Colonic mucosa (tissue), 4 donors: ENCODE measurements at regions of chr11 and their contacts with region 1.

Region 1: DNA sequence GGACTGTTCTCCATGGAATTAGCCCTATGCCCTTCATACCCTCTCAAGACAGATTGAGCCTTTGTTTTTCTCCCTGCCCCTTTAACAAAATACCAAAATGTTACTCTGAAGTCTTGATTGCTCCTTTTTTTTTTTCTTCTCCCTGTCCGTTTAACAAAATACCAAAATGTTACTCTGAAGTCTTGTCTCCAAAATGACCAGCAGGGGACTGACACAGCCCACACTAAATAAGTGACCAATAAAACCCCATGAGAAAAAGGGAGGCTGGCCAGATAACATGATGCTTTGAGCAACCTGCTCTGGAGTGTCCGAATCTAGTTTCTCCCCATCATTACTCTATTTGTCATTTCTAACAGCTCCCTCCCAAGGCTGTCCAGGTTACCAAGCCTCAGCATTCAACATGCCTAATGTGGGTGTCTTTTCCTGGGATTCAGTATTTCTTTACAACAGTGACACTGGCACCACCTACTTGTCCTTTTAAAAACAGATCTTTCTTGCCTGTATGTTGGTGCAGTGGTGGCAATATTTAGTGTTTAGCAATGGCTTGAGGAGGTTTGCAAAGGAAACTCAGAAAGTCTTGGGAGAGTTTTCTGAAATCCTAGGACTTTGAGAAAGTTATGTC is 42.7 kb upstream of the SLC1A2 start:
- DNase-seq: no peak
- H3K4me3 ChIP-seq: no peak overlapping the region
- H3K27ac ChIP-seq: no peak overlapping the region
- H3K4me1 ChIP-seq: no peaks in the 10 kb centered on the region
- H3K27me3 ChIP-seq: no peaks in the 10 kb centered on the region
- CTCF ChIP-seq: no peak

Region 2: GRCh38 chr11:35529971-35530495 is 68.0 kb after region 1 on chr11:
- intact Hi-C with region 1: loop called (anchors 2 kb)
- DNase-seq: no peak
- H3K4me3 ChIP-seq: no peak overlapping the region
- H3K27ac ChIP-seq: no peak overlapping the region
- H3K4me1 ChIP-seq: no peaks in the 10 kb centered on the region
- H3K27me3 ChIP-seq: peaks cover 11% of the 10 kb centered on the region
- CTCF ChIP-seq: no peak